B cell (primary cell): ENCODE measurements at regions of chr9 and their contacts with region 1.

Region 1: DNA sequence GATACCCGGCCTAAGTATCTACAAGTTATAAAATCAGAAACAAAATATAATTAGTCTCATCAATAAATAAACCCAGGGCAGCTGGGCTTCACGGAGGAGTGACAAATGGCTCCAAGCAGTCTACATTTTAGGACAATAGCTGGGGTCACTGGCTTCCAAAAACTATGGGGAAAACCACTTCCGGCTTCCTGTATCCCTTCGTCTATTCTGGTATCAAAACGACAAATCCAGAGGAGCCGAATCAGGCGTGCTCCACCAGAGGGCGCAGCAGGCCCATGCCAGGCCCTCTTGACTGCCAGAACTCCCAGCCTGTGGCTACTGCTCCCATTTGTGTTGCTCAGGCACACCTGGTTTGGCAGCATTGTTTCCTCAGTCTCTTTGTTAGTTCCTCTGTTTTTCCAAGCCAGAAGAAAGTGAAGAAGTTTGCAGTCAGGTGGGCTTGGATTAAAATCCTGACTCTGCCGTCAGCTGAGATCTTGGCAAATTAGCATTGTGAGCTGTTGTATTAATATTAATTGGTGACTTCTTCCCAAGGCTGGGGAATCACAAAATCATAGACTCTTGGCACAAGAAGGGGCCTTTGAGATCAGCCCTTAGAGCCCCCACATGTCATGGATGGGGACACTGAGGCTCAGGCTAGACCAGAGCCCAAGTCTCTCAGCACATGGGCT is 11.6 kb upstream of the RAB14 start:
- DNase-seq: peak; percentile 75
- ATAC-seq: peak; percentile 74
- H3K4me3 ChIP-seq: no peak overlapping the region
- H3K4me3 Mint-ChIP-seq: no peak overlapping the region
- H3K27ac ChIP-seq: no peak overlapping the region
- H3K27ac Mint-ChIP-seq: peak overlapping the region; percentile 42
- H3K4me1 ChIP-seq: peaks cover 5 to 14% of the 10 kb centered on the region in 2 donors
- H3K4me1 Mint-ChIP-seq: peaks cover 20% of the 10 kb centered on the region
- H3K27me3 ChIP-seq: no peaks in the 10 kb centered on the region
- H3K27me3 Mint-ChIP-seq: no peaks in the 10 kb centered on the region
- CTCF ChIP-seq: peak; percentile 94

Region 2: GRCh38 chr9:121185774-121186403 is 27.4 kb before region 1 on chr9:
- CTCF ChIA-PET with region 1: interaction called, 11 read pairs
- POLR2A ChIA-PET with region 1: no interaction called
- intact Hi-C with region 1: no loop called
- DNase-seq: no peak
- ATAC-seq: no peak
- H3K4me3 ChIP-seq: no peak overlapping the region
- H3K4me3 Mint-ChIP-seq: peak overlapping the region; percentile 23
- H3K27ac ChIP-seq: peak overlapping the region; percentile 34 to 64
- H3K27ac Mint-ChIP-seq: peak overlapping the region; percentile 66
- H3K4me1 ChIP-seq: peaks cover 36 to 43% of the 10 kb centered on the region in 2 donors
- H3K4me1 Mint-ChIP-seq: peaks cover 59% of the 10 kb centered on the region
- H3K27me3 ChIP-seq: no peaks in the 10 kb centered on the region
- H3K27me3 Mint-ChIP-seq: no peaks in the 10 kb centered on the region
- CTCF ChIP-seq: no peak

Region 3: GRCh38 chr9:121194743-121195142 is 18.5 kb before region 1 on chr9:
- CTCF ChIA-PET with region 1: interaction called, 61 read pairs
- POLR2A ChIA-PET with region 1: interaction called, 4 read pairs
- intact Hi-C with region 1: no loop called
- DNase-seq: no peak
- ATAC-seq: peak; percentile 21
- H3K4me3 ChIP-seq: no peak overlapping the region
- H3K4me3 Mint-ChIP-seq: no peak overlapping the region
- H3K27ac ChIP-seq: peak overlapping the region in 1 of 2 donors; percentile 75
- H3K27ac Mint-ChIP-seq: peak overlapping the region; percentile 15
- H3K4me1 ChIP-seq: peaks cover 31 to 90% of the 10 kb centered on the region in 2 donors
- H3K4me1 Mint-ChIP-seq: peaks cover 85% of the 10 kb centered on the region
- H3K27me3 ChIP-seq: no peaks in the 10 kb centered on the region
- H3K27me3 Mint-ChIP-seq: no peaks in the 10 kb centered on the region
- CTCF ChIP-seq: no peak

Region 4: DNA sequence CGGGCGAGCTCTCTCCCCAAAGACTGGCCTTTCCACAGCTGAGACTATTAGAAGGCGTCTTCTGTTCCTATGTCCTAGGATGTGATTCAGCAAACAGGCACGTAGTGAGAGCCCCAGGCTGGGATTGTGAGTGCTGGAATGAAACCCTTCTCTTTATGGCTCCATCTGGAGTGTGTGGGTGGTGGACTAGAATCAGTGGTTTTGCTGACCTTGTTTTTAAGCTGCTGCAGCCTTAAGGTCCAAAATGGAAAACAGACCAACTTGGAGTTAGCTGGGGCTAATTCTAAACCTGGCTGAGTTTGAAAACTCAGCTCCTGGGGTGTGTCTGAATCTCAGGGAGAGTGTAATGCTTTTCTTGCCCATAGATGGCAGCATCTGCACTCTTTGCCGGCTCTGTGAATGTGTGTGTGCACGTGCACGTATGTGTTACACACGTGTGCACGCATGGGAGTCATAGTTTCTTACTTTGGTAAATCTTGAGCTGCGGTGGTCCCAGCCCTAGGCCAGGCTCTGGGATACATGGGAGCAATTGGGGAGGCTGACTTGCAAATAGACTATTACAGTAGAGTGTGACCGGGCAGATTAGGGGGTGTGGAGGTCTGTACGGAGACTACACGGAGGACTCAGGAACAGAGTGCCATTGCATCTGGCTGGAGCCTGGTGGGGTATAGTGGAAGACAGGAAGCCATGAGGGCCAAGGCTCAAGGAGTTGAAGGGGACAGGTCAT is 65.4 kb after region 1 on chr9:
- CTCF ChIA-PET with region 1: interaction called, 17 read pairs
- POLR2A ChIA-PET with region 1: no interaction called
- intact Hi-C with region 1: loop called (anchors 2 kb)
- DNase-seq: peak; percentile 62
- ATAC-seq: peak; percentile 82
- H3K4me3 ChIP-seq: no peak overlapping the region
- H3K4me3 Mint-ChIP-seq: no peak overlapping the region
- H3K27ac ChIP-seq: no peak overlapping the region
- H3K27ac Mint-ChIP-seq: peak overlapping the region; percentile 22
- H3K4me1 ChIP-seq: peaks cover 3 to 20% of the 10 kb centered on the region in 2 donors
- H3K4me1 Mint-ChIP-seq: peaks cover 22% of the 10 kb centered on the region
- H3K27me3 ChIP-seq: no peaks in the 10 kb centered on the region
- H3K27me3 Mint-ChIP-seq: no peaks in the 10 kb centered on the region
- CTCF ChIP-seq: peak; percentile 73

Region 5: DNA sequence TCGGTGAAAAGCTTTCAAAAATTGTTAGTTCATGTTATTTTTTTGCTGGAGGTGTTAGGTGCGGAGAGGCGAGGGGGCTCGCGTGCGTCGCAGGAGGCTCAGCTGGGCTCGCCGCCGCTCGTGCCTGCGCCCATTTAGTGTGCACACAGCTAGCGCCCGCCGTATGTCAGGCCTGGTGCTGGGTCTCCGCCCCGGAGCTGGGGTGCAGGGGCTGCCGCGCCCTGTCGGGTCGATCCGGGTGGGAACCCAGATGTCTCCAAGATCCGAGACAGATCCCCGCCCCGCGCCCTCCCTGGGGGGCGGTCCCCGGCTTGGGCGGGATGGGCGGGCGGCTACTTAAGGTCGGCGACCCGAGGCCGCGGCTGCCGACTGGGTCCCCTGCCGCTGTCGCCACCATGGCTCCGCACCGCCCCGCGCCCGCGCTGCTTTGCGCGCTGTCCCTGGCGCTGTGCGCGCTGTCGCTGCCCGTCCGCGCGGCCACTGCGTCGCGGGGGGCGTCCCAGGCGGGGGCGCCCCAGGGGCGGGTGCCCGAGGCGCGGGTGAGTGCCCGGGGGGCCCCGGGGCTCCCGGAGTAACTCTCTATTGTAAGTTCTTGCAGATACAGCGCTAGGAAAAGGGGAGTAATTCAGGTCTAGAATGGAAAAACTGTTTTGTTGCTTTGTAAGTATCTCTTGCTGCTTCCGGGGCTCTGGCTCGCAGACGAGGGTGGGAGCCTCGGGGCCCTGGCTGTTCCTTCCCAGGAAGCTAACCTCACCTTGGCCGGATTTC is 86.4 kb after region 1 on chr9:
- CTCF ChIA-PET with region 1: interaction called, 4 read pairs
- POLR2A ChIA-PET with region 1: interaction called, 3 read pairs
- intact Hi-C with region 1: loop called (anchors 5 kb)
- DNase-seq: peak; percentile 57
- ATAC-seq: peak; percentile 55
- H3K4me3 ChIP-seq: peak overlapping the region; percentile 17 to 61 (median 53)
- H3K4me3 Mint-ChIP-seq: peak overlapping the region; percentile 86
- H3K27ac ChIP-seq: peak overlapping the region; percentile 51 to 64
- H3K27ac Mint-ChIP-seq: peak overlapping the region; percentile 83
- H3K4me1 ChIP-seq: peaks cover 20 to 38% of the 10 kb centered on the region in 2 donors
- H3K4me1 Mint-ChIP-seq: peaks cover 25% of the 10 kb centered on the region
- H3K27me3 ChIP-seq: peaks cover 0 to 5% (median 2%) of the 10 kb centered on the region in 4 experiments
- H3K27me3 Mint-ChIP-seq: peaks cover 4% of the 10 kb centered on the region
- CTCF ChIP-seq: no peak

Region 6: GRCh38 chr9:121326130-121326838 is 113.0 kb after region 1 on chr9:
- CTCF ChIA-PET with region 1: interaction called, 60 read pairs
- POLR2A ChIA-PET with region 1: no interaction called
- intact Hi-C with region 1: loop called (anchors 5 kb)
- DNase-seq: no peak
- ATAC-seq: no peak
- H3K4me3 ChIP-seq: no peak overlapping the region
- H3K4me3 Mint-ChIP-seq: no peak overlapping the region
- H3K27ac ChIP-seq: no peak overlapping the region
- H3K27ac Mint-ChIP-seq: no peak overlapping the region
- H3K4me1 ChIP-seq: no peaks in the 10 kb centered on the region
- H3K4me1 Mint-ChIP-seq: no peaks in the 10 kb centered on the region
- H3K27me3 ChIP-seq: no peaks in the 10 kb centered on the region
- H3K27me3 Mint-ChIP-seq: no peaks in the 10 kb centered on the region
- CTCF ChIP-seq: no peak